ACHN (cell line): ENCODE measurements at regions of chr12 and their contacts with region 1.

Region 1: GRCh38 chr12:45388545-45388944 is 172.7 kb downstream of the ANO6 start:
- DNase-seq: peak; percentile 67

Region 2: GRCh38 chr12:45183246-45183645 is 205.3 kb before region 1 on chr12:
- in situ Hi-C with region 1: loop called (anchors 25 kb)
- DNase-seq: peak; percentile 36